ENCODE measurements at regions of chr15 and their contacts with region 1.

Region 1: DNA sequence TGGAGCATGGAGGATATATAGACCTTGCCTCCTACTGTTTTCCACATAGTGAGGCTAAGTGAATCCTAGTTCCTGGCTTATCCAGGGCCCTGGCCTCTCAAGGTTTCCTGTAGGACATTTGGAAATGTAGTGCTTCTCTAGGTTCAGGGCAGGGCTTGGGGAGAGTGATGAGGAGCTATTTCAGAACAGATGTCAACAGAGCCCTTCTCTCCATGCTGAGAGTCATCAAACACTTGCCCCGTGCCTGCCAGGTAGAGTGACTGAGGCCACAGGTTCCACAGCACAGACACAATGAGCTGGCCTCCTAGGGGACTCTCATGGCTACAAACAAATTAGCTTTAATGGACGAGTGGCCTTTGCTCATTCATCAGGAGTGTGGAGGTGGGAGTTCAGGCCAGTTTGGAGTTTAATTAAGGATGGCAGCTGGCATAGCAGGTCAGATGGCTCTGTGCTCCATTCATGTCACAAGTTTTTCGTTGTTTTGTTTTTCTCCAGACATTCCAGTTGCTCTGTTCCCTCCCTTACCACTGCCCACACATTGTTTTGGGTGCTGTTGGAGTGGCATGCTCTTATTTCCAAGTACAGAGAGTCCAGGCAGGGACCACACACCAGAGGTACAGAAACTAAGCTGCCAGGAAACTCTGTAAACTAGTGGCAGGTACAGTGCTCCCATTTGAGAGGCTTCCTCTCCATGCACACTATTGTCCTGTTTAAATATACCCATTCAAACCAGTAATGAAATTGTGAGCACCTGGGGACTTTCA is 189.8 kb downstream of the RYR3 start:
- DNase-seq: no peak
- H3K4me3 ChIP-seq: no peak overlapping the region
- H3K27ac ChIP-seq: no peak overlapping the region
- H3K4me1 ChIP-seq: no peaks in the 10 kb centered on the region
- H3K27me3 ChIP-seq: no peaks in the 10 kb centered on the region
- CTCF ChIP-seq: no peak
- POLR2A ChIP-seq: no peak

Region 2: DNA sequence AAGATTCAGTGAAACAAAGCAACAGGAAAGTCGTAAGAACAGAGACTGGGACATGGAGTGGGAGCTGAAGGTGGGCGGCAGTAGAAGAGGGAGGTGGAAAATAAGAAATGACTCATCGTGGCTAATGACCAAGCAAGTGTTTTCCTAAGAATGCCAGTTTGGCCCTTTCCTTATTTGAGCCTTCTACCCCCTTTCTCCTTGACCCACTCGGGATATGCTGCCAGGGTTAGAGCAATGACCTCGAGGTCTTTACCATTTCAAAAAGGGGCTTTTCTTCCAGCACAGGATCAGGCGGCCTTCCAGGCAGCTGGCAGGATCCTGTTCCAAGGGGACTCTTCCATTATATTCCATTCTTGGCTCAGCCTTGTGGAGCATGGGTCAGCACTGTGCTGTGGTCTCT is 51.2 kb after region 1 on chr15:
- intact Hi-C with region 1: loop called (anchors 5 kb)
- DNase-seq: no peak
- H3K4me3 ChIP-seq: no peak overlapping the region
- H3K27ac ChIP-seq: no peak overlapping the region
- H3K4me1 ChIP-seq: no peaks in the 10 kb centered on the region
- H3K27me3 ChIP-seq: no peaks in the 10 kb centered on the region
- CTCF ChIP-seq: no peak
- POLR2A ChIP-seq: no peak

Measured in breast epithelium (tissue), 4 donors.